Activated CD4-positive, alpha-beta memory T cell treated with anti-CD3 and anti-CD28 coated beads, Interleukin-2, amount 10 ng/mL, durations not matched to agents 7 days and 5 days (primary cell): ENCODE measurements at regions of chr5 and their contacts with region 1.

Region 1: GRCh38 chr5:137754126-137754960 is at the start of gene HNRNPA0:
- DNase-seq: peak; percentile 96
- H3K4me3 Mint-ChIP-seq: peak within 1 kb of the TSS; percentile 86
- H3K27ac Mint-ChIP-seq: peak within 1 kb of the TSS; percentile 97
- H3K4me1 Mint-ChIP-seq: peaks cover 37% of the 10 kb centered on the region
- H3K27me3 Mint-ChIP-seq: peaks cover 3% of the 10 kb centered on the region
- total RNA-seq, gene HNRNPA0: 24.0 to 24.6 TPM

Region 2: DNA sequence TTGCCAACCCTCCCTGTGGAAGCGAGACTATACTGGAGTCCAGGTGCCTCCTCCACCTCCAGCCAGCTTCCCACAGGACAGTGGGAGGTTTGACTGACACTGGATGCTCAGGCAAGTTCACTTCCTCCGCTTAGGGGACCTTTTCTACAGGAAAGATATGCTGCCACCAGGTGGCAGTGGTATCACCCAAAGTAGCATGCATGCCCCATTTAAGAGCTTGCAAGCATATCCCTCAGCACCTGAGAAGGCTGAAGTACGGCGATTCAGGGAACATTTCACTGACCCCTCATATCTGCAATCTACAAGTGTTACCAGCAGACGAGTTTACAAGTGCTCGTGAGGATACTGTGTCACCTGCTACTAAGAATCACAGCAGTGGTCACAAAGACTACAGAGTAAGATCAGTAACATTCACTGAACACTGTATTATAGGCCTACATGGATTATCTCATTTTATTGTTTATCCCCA is 94.0 kb before region 1 on chr5:
- CTCF ChIA-PET with region 1: interaction called, 12 read pairs
- POLR2A ChIA-PET with region 1: interaction called, 11 read pairs
- DNase-seq: peak; percentile 78
- H3K4me3 Mint-ChIP-seq: no peak overlapping the region
- H3K27ac Mint-ChIP-seq: no peak overlapping the region
- H3K4me1 Mint-ChIP-seq: peaks cover 5% of the 10 kb centered on the region
- H3K27me3 Mint-ChIP-seq: no peaks in the 10 kb centered on the region

Region 3: GRCh38 chr5:137695651-137696428 is 58.5 kb before region 1 on chr5:
- CTCF ChIA-PET with region 1: interaction called, 8 read pairs
- POLR2A ChIA-PET with region 1: interaction called, 34 read pairs
- DNase-seq: peak; percentile 28
- H3K4me3 Mint-ChIP-seq: peak overlapping the region; percentile 31
- H3K27ac Mint-ChIP-seq: peak overlapping the region; percentile 86
- H3K4me1 Mint-ChIP-seq: peaks cover 29% of the 10 kb centered on the region
- H3K27me3 Mint-ChIP-seq: no peaks in the 10 kb centered on the region

Region 4: DNA sequence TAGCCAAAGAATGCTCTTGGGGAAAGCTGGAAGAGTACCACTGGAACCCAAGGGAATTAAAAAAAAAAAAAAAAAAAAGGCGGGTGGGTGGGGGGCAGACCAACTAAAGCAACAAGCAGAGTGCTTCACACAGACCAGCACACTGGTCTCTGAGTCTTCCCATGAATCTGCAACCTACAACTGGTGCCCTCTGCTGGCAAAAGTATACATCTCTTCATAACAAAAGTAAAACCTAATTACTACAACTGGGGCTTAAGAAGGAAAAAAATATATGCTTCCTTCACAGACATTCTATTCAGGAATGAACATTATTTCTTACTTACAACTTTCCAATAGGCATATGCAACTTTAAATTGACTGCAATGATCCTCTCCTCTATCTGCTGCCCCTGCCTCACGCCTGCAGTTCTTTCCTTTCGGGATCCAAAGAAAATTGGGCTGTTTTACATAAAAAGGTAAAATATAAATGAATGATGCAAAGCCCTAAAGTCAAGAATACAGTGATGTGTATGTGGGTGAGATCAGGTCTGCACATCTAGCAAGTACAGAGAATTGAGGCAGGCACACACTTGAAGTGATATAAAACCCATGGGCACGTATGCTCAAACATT is 11.2 kb before region 1 on chr5:
- CTCF ChIA-PET with region 1: interaction called, 30 read pairs
- POLR2A ChIA-PET with region 1: interaction called, 20 read pairs
- DNase-seq: peak; percentile 61
- H3K4me3 Mint-ChIP-seq: no peak overlapping the region
- H3K27ac Mint-ChIP-seq: no peak overlapping the region
- H3K4me1 Mint-ChIP-seq: peaks cover 8% of the 10 kb centered on the region
- H3K27me3 Mint-ChIP-seq: no peaks in the 10 kb centered on the region

Region 5: DNA sequence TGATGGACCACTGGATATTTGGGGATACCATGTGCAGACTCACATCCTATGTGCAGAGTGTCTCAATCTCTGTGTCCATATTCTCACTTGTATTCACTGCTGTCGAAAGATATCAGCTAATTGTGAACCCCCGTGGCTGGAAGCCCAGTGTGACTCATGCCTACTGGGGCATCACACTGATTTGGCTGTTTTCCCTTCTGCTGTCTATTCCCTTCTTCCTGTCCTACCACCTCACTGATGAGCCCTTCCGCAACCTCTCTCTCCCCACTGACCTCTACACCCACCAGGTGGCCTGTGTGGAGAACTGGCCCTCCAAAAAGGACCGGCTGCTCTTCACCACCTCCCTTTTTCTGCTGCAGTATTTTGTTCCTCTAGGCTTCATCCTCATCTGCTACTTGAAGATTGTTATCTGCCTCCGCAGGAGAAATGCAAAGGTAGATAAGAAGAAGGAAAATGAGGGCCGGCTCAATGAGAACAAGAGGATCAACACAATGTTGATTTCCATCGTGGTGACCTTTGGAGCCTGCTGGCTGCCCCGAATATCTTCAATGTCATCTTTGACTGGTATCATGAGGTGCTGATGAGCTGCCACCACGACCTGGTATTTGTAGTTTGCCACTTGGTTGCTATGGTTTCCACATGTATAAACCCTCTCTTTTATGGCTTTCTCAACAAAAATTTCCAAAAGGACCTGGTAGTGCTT is 54.3 kb after region 1 on chr5:
- CTCF ChIA-PET with region 1: no interaction called
- POLR2A ChIA-PET with region 1: no interaction called
- DNase-seq: no peak
- H3K4me3 Mint-ChIP-seq: no peak overlapping the region
- H3K27ac Mint-ChIP-seq: no peak overlapping the region
- H3K4me1 Mint-ChIP-seq: no peaks in the 10 kb centered on the region
- H3K27me3 Mint-ChIP-seq: peaks cover 3% of the 10 kb centered on the region

Region 6: GRCh38 chr5:137888857-137889759 is 134.8 kb after region 1 on chr5 and contains the start of gene PKD2L2:
- CTCF ChIA-PET with region 1: interaction called, 11 read pairs
- POLR2A ChIA-PET with region 1: interaction called, 35 read pairs
- DNase-seq: peak; percentile 85
- H3K4me3 Mint-ChIP-seq: peak within 1 kb of the TSS; percentile 83
- H3K27ac Mint-ChIP-seq: peak within 1 kb of the TSS; percentile 86
- H3K4me1 Mint-ChIP-seq: peaks cover 16% of the 10 kb centered on the region
- H3K27me3 Mint-ChIP-seq: peaks cover 3% of the 10 kb centered on the region
- total RNA-seq, gene PKD2L2: 0.30 TPM in 1 of 2 experiments, not detected in the other

Region 7: DNA sequence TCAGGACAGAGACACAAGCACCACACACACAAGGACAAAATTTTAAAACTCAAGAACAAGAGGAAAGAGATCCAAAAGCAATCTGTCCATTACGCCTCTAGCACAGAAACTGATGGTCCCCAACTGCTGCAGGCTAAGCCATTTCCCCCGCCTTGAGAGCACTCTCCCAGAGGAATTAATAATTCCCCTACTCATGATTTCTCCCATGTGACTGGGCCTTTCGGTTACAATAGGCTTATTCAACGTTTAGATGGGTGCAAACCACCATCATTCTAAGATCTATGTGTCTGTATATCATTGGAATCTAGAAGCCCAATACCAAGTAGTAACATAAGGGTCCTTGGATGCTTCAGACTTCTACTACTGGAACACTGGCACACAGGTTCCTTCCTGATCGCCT is 405.3 kb after region 1 on chr5:
- CTCF ChIA-PET with region 1: no interaction called
- POLR2A ChIA-PET with region 1: no interaction called
- DNase-seq: no peak
- H3K4me3 Mint-ChIP-seq: no peak overlapping the region
- H3K27ac Mint-ChIP-seq: no peak overlapping the region
- H3K4me1 Mint-ChIP-seq: no peaks in the 10 kb centered on the region
- H3K27me3 Mint-ChIP-seq: no peaks in the 10 kb centered on the region